K562 (cell line): ENCODE measurements at regions of chr6 and their contacts with region 1.

Region 1: DNA sequence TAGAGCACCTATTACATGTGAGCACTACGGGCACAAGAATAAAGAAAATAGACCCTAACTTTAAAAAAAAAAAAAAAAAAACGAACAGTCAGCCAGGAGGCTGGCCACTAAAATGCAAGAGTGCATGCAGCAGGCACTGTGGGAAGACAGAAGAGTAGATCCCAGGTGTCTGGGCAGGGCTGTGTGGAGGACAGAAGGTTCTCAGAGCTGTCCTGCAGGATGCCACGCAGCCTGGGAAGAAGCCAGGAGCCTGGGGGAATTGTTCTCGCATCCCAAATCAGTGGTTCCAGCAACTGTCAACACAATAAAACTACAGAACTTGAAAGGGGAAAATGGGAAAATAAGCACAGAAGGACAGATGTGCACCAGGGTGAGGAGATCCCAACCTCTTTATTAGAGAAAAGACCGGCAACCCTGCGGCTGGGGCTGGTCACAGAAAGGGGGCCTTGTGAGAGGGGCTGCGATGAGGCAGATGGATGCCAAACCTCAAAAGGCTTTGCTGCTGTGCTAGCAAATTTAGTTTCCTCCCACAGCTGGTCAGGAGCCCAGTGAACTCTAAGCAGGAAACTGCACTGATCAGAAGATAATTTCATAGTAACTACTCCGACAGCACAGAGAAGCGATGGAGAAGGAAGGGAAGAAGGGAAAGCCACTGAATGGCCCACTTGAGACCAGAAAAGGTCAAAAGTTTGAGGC is 30.9 kb downstream of the MAP3K5 start:
- DNase-seq: peak in 1 of 4 experiments; percentile 76
- ATAC-seq: peak; percentile 84
- H3K4me3 ChIP-seq: no peak overlapping the region
- H3K27ac ChIP-seq: peak overlapping the region; percentile 56
- H3K4me1 ChIP-seq: peaks cover 5 to 57% of the 10 kb centered on the region in 2 experiments; a peak in 4 of 5 replicates
- H3K27me3 ChIP-seq: no peaks in the 10 kb centered on the region
- CTCF ChIP-seq: no peak
- EP300 ChIP-seq: peak; percentile 50
- POLR2A ChIP-seq: no peak
- RAD21 ChIP-seq: peak in 1 of 2 experiments; percentile 28; a peak in 1 of 4 replicates

Region 2: DNA sequence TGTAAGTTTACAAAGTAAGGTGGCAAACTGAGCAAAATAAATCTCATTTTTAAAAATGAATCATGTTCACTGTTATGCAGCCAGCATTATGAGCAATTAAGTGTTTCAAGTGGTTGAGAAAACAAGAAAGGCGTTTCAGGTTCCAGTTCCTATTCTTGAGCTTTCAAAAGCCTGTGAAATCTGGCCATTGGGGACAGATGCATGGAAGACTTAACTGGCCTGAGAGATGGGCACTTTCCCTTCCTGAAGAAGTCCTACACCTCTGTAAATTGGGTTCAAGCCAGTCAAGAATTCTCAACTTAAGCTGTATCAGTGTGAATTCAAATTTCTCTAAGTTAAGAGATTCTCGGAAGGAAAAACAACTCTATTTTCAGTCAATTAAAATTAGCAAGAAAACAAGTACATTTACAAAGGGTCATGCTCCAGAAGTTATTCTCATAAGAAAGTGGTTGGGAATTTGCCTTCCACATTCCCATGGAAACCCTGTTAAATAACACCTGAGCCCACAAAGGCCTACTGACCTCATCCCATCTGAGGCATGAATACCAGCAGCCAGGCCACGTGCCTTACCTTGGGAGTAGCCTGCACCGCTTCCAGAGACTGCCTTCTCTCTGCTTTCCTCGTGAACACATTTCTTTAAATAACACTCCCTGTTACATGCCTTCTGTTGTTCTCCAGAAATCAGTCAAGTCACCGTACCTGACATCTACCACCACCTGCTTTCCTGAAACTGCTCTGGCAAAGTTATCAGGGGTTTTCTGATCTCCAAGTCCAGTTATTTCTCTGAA is 11.5 kb after region 1 on chr6:
- CTCF ChIA-PET with region 1: no interaction called
- POLR2A ChIA-PET with region 1: interaction called, 10 read pairs
- in situ Hi-C with region 1: no loop called
- intact Hi-C with region 1: no loop called
- DNase-seq: no peak
- ATAC-seq: peak; percentile 49
- H3K4me3 ChIP-seq: no peak overlapping the region
- H3K27ac ChIP-seq: peak overlapping the region; percentile 46; the same call in 1 of the 3 replicates
- H3K4me1 ChIP-seq: peaks cover 0 to 16% of the 10 kb centered on the region in 2 experiments; a peak in 3 of 5 replicates
- H3K27me3 ChIP-seq: no peaks in the 10 kb centered on the region
- CTCF ChIP-seq: no peak
- EP300 ChIP-seq: no peak
- POLR2A ChIP-seq: no peak
- RAD21 ChIP-seq: no peak

Region 3: DNA sequence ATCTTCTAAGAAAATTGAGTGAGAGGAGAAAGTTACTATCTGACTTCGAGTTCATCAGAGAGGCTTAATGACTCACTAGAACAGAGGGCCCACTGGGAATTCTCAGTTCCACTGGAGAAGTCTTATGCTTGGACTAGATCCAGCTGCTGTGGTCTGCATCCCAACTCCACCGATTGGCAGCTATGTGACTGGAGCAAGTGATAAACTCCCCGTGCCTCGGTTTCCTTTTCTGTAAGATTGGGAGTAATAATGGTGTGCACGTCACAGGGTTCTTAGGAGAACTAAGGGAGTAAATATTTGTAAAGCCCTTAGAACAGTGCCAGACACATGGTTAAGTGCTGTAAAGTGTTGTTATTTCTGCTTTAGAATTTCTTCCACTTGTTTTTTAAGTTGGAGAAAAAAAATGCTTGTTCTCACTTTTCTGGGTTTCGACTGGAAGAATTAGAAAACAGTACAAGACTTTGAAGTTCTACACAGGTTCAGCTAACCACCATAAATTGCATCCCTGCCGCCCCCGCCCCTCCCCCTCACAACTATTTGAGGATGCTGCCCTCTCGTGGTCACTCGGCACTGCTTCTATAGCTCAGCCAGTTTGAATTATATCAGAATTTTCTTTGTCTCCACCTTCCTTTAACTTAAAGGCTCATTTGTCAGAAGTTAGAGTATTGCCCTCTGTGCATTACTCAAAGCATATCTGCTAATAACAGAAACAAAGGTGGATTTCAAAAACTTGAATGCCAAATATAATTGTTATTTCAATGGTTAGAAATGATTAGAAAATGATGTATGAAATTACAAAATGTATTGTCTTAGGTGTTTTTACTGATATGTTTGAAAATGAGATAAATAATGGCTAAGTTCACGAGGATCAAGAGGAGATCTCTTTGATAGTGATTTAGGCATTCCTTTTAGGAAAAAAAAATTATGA is 552.8 kb after region 1 on chr6:
- CTCF ChIA-PET with region 1: no interaction called
- POLR2A ChIA-PET with region 1: no interaction called
- in situ Hi-C with region 1: no loop called
- intact Hi-C with region 1: no loop called
- DNase-seq: peak; percentile 73 to 82 (median 80)
- ATAC-seq: peak; percentile 98
- H3K4me3 ChIP-seq: no peak overlapping the region
- H3K27ac ChIP-seq: no peak overlapping the region
- H3K4me1 ChIP-seq: 0 out of 5 replicates have a peak, but pooled peaks cover 0 to 6% of the 10 kb centered on the region in 2 experiments
- H3K27me3 ChIP-seq: peaks cover 0 to 4% of the 10 kb centered on the region in 2 experiments; a peak in 1 of 5 replicates
- CTCF ChIP-seq: peak; percentile 85 to 95 (median 89)
- EP300 ChIP-seq: no peak
- POLR2A ChIP-seq: no peak
- RAD21 ChIP-seq: peak; percentile 95 to 98